ENCODE measurements at regions of chr13 and their contacts with region 1.

Region 1: GRCh38 chr13:50421473-50422130 is 406.4 kb downstream of the KCNRG start:
- DNase-seq: no peak
- ATAC-seq: peak in 1 of 3 donors; percentile 33
- H3K4me3 ChIP-seq: no peak overlapping the region
- H3K4me3 Mint-ChIP-seq: no peak overlapping the region
- H3K27ac ChIP-seq: peak overlapping the region; percentile 39
- H3K27ac Mint-ChIP-seq: peak overlapping the region; percentile 69 to 77
- H3K4me1 ChIP-seq: peaks cover 11% of the 10 kb centered on the region
- H3K4me1 Mint-ChIP-seq: peaks cover 13 to 14% of the 10 kb centered on the region in 2 donors
- H3K27me3 ChIP-seq: no peaks in the 10 kb centered on the region
- H3K27me3 Mint-ChIP-seq: no peaks in the 10 kb centered on the region
- CTCF ChIP-seq: no peak

Region 2: DNA sequence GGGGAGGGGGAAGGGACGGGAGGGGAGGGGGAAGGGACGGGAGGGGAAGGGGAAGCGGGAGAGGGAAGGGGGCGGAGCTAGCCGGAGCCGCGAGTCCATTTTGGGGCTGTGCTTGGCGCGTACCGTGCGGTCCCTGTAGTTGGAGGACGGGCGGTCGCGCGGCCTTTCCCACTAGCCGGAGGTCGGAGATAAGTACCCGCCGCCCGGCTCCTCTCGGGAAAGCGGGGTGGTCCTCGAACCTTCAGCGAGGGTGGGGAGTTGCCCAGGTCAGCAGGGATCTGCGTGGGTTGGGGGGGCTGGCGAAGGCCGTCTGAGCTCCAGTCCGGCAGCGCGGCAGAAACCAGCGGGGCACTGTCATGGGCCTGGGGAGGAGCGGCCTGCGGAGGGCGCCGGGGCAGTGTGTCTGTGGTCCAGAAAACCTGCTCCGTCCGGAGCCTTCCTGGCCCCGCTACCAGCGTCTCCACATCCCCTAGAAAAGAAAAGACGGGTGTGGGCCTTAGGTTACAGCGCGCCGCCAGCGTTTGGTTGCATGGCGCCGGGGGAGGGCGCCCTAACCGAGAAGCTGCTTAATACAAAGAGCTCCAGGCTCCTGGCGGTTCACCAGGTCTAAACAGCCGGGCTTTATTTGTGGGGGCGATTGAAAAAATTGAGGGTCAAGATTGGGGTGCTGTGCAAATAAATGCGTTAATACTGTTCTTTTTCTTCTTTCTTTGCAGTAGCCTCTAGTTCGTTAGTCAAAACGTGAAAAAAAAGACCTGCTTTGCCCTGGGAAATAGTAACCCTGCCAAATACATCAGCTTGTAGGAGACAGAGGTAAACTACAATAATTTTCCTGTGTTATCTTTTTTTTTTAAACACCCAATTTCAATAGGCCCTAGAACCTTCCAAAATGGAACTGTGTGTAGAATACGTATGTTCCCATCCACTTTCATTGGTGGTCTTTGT is 424.4 kb before region 1 on chr13 and contains the start of gene TRIM13:
- intact Hi-C with region 1: loop called (anchors 5 kb)
- DNase-seq: peak; percentile 79 to 90
- ATAC-seq: peak; percentile 79 to 89 (median 84)
- H3K4me3 ChIP-seq: peak within 1 kb of the TSS; percentile 100
- H3K4me3 Mint-ChIP-seq: peak within 1 kb of the TSS; percentile 90
- H3K27ac ChIP-seq: peak within 1 kb of the TSS; percentile 99
- H3K27ac Mint-ChIP-seq: peak within 1 kb of the TSS; percentile 80 to 90
- H3K4me1 ChIP-seq: peaks cover 17% of the 10 kb centered on the region
- H3K4me1 Mint-ChIP-seq: peaks cover 18 to 35% of the 10 kb centered on the region in 2 donors
- H3K27me3 ChIP-seq: no peaks in the 10 kb centered on the region
- H3K27me3 Mint-ChIP-seq: no peaks in the 10 kb centered on the region
- CTCF ChIP-seq: peak; percentile 79
- total RNA-seq, gene TRIM13: 18.9 to 22.1 (median 20.6) TPM

Region 3: GRCh38 chr13:50085063-50085462 is 336.5 kb before region 1 on chr13:
- intact Hi-C with region 1: no loop called
- DNase-seq: peak in 1 of 2 donors; percentile 63
- ATAC-seq: no peak
- H3K4me3 ChIP-seq: no peak overlapping the region
- H3K4me3 Mint-ChIP-seq: no peak overlapping the region
- H3K27ac ChIP-seq: no peak overlapping the region
- H3K27ac Mint-ChIP-seq: no peak overlapping the region
- H3K4me1 ChIP-seq: peaks cover 12% of the 10 kb centered on the region
- H3K4me1 Mint-ChIP-seq: peaks cover 34 to 36% of the 10 kb centered on the region in 2 donors
- H3K27me3 ChIP-seq: no peaks in the 10 kb centered on the region
- H3K27me3 Mint-ChIP-seq: peaks cover 0 to 3% of the 10 kb centered on the region in 2 donors
- CTCF ChIP-seq: peak; percentile 77

Measured in natural killer cell (primary cell).